Aorta (tissue), 5 donors: ENCODE measurements at regions of chr1 and their contacts with region 1.

Region 1: DNA sequence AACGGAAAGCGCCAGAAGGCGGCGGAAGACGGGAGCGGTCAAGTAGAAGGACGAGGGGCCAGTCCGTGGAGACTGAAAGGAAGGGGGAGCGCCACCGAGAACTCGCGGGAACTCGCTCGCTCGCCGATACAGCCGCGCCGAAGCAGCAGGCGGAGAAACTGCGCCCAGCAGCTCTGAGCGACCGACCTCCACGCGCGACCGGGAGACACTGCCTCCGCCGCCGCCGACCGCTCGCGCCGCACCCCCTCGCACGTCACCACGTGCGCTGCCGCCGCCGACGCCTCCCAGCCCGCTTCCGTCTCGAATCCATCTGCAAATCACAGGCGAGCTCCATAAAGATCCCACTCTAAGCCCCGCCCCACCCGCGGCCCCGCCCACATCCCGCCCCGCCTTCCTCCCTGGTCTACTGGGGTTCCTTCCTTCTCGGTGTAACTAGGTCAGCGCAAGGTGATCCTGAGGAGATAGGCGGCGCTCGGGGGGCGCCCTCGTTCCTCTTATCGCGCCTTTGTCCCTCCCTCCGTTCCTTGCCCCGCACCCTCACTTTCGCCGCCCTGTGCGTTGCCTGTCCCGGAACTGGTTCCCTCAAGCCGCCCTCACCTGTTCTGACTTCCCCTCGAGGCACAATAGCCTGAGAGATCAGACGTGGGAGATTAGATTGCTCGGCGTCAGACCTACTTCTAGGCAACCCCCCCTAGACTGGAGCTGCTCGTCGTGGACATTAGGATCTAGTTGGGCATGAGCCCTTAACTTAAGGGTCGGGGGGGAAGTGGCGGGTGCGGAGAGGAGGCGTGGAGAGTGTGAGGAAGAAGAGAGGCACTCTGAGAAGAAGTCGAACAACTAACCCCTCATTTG is at the start of gene IVNS1ABP:
- DNase-seq: peak; percentile 97 to 98
- ATAC-seq: peak; percentile 96
- H3K4me3 ChIP-seq: peak within 1 kb of the TSS; percentile 64 to 73
- H3K27ac ChIP-seq: peak within 1 kb of the TSS; percentile 54 to 61
- H3K4me1 ChIP-seq: peaks cover 2 to 8% of the 10 kb centered on the region in 2 donors
- H3K27me3 ChIP-seq: no peaks in the 10 kb centered on the region
- total RNA-seq, gene IVNS1ABP: 84.8 to 93.8 TPM

Region 2: GRCh38 chr1:185404291-185404690 is 87.0 kb after region 1 on chr1:
- intact Hi-C with region 1: loop called in 1 of 2 experiments (anchors 10 kb)
- DNase-seq: peak; percentile 73 to 81
- ATAC-seq: peak; percentile 57
- H3K4me3 ChIP-seq: no peak overlapping the region
- H3K27ac ChIP-seq: no peak overlapping the region
- H3K4me1 ChIP-seq: peaks cover 0 to 2% of the 10 kb centered on the region in 2 donors
- H3K27me3 ChIP-seq: no peaks in the 10 kb centered on the region

Region 3: GRCh38 chr1:185996211-185996610 is 679.0 kb after region 1 on chr1:
- intact Hi-C with region 1: loop called in 1 of 2 experiments (anchors 10 kb)
- DNase-seq: peak; percentile 76 to 79
- ATAC-seq: no peak
- H3K4me3 ChIP-seq: no peak overlapping the region
- H3K27ac ChIP-seq: no peak overlapping the region
- H3K4me1 ChIP-seq: peaks cover 0 to 2% of the 10 kb centered on the region in 2 donors
- H3K27me3 ChIP-seq: no peaks in the 10 kb centered on the region